GM10248 (cell line): ENCODE measurements at regions of chr17 and their contacts with region 1.

Region 1: GRCh38 chr17:9768381-9768934 is 22.9 kb downstream of the DHRS7C start:
- DNase-seq: peak; percentile 52
- CTCF ChIP-seq: peak; percentile 27

Region 2: DNA sequence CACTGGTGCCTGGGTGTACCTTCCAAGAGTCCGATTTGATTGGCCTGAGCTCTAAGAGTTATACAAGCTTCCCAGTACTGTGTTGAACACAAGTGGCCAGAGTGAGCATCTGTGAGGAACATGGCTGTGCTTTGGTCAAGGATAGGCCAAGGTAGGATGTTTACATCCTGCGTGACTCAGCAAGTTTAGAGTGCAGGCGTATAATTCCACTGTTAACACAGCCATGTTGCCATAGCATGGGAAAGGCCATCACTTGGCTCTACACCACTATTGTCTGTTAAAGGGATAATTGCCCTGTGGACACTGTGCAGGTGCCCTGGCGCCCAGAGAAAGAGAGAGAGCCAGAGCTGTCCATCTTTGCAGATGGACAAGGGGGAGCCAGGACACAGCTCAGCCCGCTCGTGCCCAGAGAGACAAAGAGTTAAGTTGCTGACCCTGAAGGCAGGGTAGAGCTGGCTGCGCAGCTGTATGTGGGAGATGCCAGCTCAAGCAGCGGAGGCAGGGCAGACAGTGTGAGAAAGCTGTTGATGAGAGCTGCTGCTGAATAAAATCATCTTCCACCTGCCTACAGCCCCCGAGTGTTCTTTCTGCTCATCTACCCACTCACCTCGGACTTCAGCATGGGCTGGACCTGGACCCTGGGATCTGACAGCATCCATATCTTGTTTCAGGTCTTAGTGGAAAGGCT is 180.3 kb before region 1 on chr17:
- CTCF ChIA-PET with region 1: no interaction called
- POLR2A ChIA-PET with region 1: no interaction called
- DNase-seq: no peak
- CTCF ChIP-seq: no peak

Region 3: GRCh38 chr17:9788597-9788996 is 20.1 kb after region 1 on chr17:
- CTCF ChIA-PET with region 1: interaction called, 10 read pairs
- POLR2A ChIA-PET with region 1: no interaction called
- DNase-seq: no peak
- CTCF ChIP-seq: no peak

Region 4: DNA sequence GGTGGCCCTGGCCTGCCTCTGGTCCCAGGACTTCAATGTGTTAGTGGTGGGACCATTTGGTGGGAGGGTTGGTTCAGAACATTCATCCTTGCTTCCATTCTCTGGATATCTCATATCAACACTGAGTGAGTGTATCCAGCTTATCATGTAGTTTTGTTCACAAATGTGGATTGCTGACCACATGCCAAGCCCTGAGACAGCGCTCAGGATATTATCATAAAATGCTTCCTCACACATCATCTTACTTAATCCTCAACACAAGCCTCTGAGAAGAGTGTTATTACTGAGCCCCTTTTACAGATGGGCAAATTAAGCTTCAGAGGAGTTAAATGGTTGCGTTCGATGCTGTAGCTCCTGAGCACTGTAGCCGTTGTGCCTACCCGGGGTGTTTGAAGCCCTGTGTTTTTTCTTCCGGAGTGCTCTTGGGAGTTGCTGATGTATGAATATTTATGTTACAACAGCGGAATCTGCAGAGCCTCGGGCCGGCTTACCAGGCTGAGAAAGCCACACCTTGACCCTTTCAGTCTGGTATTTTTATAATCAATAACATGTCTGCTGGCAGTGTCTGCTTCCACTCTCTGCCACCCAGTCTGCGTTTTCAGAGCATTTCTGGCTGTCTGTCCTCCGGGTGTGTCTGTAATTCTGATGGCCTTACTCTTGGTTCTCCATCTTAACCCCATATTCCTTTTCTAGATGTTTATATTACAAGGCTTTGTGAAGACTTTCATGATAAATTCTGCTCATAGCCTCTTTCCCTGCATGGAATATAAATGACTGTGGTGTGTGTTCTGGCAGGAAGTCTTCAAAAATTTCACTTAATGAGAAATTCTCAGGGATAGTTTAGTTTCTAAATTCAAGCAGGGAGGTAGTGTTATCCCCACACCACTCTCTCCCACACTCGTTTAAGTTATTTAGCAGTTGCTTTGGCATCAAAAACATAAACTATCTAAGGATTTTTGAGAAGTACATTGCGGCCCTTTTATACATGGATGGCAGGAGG is 60.1 kb after region 1 on chr17:
- CTCF ChIA-PET with region 1: no interaction called
- POLR2A ChIA-PET with region 1: no interaction called
- DNase-seq: no peak
- CTCF ChIP-seq: no peak